Naive thymus-derived CD4-positive, alpha-beta T cell (primary cell): ENCODE measurements at regions of chr14 and their contacts with region 1.

Region 1: DNA sequence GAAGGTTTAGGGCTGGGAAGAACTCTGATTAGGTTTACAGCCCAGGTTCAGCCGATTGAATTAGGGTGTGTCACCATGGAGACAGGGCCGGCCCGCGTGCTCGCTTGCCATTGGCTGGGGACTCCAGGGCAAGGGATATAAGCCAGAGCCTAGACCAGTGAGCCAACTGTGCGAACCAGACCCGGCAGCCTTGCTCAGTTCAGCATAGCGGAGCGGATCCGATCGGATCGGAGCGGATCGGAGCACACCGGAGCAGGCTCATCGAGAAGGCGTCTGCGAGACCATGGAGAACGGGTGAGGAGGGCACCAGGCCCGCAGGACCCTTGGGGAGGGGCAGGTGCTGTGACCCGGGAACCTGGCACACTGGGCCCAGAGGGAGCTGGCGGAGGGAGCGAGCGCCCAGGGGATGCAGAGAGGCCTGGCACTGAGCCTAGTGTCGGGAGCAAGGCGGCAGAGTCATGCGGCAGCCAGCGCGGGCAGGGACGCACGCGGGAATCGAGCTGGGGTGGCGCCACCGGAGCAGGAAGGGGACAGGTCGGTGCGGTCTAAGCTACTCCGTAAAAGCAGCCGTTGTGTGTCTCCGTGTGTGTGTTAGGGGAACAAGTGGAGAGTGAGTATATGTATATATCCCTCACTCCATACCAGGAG is at the start of gene PNP:
- DNase-seq: peak; percentile 74 to 88 (median 84)
- ATAC-seq: peak; percentile 94
- H3K4me3 ChIP-seq: peak within 1 kb of the TSS; percentile 87
- H3K4me3 Mint-ChIP-seq: peak within 1 kb of the TSS; percentile 95 to 100 (median 99)
- H3K27ac ChIP-seq: peak within 1 kb of the TSS; percentile 87
- H3K27ac Mint-ChIP-seq: peak within 1 kb of the TSS; percentile 89 to 98 (median 97)
- H3K4me1 ChIP-seq: peaks cover 13 to 32% of the 10 kb centered on the region in 2 donors
- H3K4me1 Mint-ChIP-seq: peaks cover 40 to 49% (median 43%) of the 10 kb centered on the region in 7 donors
- H3K27me3 ChIP-seq: no peaks in the 10 kb centered on the region
- H3K27me3 Mint-ChIP-seq: peaks cover 0 to 6% (median 0%) of the 10 kb centered on the region in 5 donors
- total RNA-seq, gene PNP: 58.9 to 179 (median 83.0) TPM

Region 2: GRCh38 chr14:20482382-20482781 is 13.0 kb after region 1 on chr14:
- CTCF ChIA-PET with region 1: interaction called, 3 read pairs
- POLR2A ChIA-PET with region 1: interaction called, 32 read pairs
- intact Hi-C with region 1: loop called (anchors 1 kb)
- DNase-seq: no peak
- ATAC-seq: no peak
- H3K4me3 ChIP-seq: no peak overlapping the region
- H3K4me3 Mint-ChIP-seq: peak overlapping the region in 2 of 10 donors; percentile 20 to 26
- H3K27ac ChIP-seq: no peak overlapping the region
- H3K27ac Mint-ChIP-seq: peak overlapping the region in 8 of 9 donors; percentile 70 to 92 (median 86)
- H3K4me1 ChIP-seq: peaks cover 35 to 36% of the 10 kb centered on the region in 2 donors
- H3K4me1 Mint-ChIP-seq: peaks cover 17 to 94% (median 81%) of the 10 kb centered on the region in 7 donors
- H3K27me3 ChIP-seq: no peaks in the 10 kb centered on the region
- H3K27me3 Mint-ChIP-seq: peaks cover 0 to 8% (median 0%) of the 10 kb centered on the region in 5 donors

Region 3: GRCh38 chr14:21287168-21287567 is 817.8 kb after region 1 on chr14:
- CTCF ChIA-PET with region 1: no interaction called
- POLR2A ChIA-PET with region 1: no interaction called
- intact Hi-C with region 1: no loop called
- DNase-seq: no peak
- ATAC-seq: no peak
- H3K4me3 ChIP-seq: no peak overlapping the region
- H3K4me3 Mint-ChIP-seq: no peak overlapping the region
- H3K27ac ChIP-seq: no peak overlapping the region
- H3K27ac Mint-ChIP-seq: no peak overlapping the region
- H3K4me1 ChIP-seq: no peaks in the 10 kb centered on the region
- H3K4me1 Mint-ChIP-seq: no peaks in the 10 kb centered on the region
- H3K27me3 ChIP-seq: no peaks in the 10 kb centered on the region
- H3K27me3 Mint-ChIP-seq: peaks cover 0 to 20% (median 6%) of the 10 kb centered on the region in 5 donors